ENCODE measurements at regions of chr1 and their contacts with region 1.

Region 1: DNA sequence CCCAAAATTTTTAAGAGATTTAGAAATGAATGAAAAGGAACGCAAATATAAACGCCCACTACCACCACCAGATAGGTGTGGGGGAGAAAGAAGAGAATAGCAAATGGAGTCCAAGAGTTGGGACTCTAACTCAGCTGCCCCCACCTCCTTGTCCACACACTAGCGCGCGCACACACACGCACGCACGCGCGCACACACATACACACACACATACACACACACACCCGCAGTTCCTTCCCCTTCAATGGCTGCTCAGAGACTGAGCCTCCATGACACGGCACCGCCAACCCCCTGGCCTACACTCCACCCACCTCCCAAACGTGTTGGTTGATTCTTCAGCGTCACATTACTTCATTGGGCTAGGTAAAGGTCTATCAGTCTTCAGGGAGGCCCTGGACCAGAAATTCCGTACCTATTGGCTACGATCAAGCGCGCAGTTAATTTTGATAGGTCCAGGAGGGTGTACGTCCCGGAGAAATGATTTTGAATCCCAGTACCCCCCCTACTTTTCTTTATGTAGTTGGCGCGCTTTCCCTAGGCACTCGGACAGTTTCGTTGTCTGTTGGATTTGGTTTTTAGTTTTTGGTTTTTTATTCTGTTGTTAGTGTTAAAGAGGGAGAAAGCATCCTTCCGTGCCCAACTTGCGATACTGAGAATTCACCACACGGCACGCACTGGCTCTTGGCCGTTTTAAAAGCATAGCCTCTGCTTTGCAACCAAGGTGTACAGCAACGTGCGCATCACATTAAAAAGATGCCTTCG is at the start of gene ANP32E:
- DNase-seq: peak; percentile 95
- H3K4me3 Mint-ChIP-seq: no peak within 1 kb of the TSS
- H3K27ac Mint-ChIP-seq: peak within 1 kb of the TSS; percentile 97
- H3K4me1 Mint-ChIP-seq: peaks cover 18% of the 10 kb centered on the region
- H3K27me3 Mint-ChIP-seq: peaks cover 1% of the 10 kb centered on the region
- total RNA-seq, gene ANP32E: 195 and 198 TPM in 2 replicates

Region 2: DNA sequence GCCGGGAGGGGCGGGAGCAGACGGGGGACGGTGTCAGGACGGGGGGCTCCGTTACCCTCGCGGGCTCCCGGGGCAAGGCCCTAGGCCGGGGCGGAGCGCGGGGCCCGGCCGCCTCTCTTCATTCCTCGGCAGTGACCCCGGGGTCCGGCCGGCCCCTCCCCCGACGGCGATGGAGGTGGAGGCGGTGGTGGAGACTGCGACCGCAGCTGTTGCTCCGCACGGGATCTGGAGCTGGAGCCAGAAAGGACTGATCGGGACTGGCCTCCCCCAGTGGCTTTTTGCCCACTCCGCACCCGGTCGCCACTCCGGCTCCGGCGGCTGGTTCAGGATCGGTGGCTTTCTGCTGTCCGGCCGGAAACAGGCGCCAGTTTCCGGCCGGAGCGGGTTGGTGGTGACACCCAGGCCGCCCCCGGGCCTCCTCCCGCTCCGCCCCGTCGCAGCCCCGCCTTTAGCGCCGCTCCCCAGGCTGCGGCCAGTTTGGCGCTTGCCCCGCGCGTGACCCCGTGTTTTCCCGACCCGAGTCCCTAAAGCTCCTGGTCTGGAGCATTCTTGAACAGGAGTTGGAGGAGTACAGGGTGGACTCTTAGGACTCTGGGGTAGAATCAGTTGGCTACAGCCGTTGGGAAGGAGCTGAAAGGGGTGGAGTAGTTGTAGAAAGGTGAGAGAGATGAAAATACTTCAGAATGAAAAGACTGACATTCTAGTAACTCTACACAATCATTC is 225.5 kb before region 1 on chr1 and contains the start of gene OTUD7B:
- intact Hi-C with region 1: loop called (anchors 5 kb)
- DNase-seq: peak; percentile 69
- H3K4me3 Mint-ChIP-seq: peak within 1 kb of the TSS; percentile 97
- H3K27ac Mint-ChIP-seq: peak within 1 kb of the TSS; percentile 97
- H3K4me1 Mint-ChIP-seq: peaks cover 38% of the 10 kb centered on the region
- H3K27me3 Mint-ChIP-seq: no peaks in the 10 kb centered on the region
- total RNA-seq, gene OTUD7B: 26.1 and 28.2 TPM in 2 replicates

Region 3: DNA sequence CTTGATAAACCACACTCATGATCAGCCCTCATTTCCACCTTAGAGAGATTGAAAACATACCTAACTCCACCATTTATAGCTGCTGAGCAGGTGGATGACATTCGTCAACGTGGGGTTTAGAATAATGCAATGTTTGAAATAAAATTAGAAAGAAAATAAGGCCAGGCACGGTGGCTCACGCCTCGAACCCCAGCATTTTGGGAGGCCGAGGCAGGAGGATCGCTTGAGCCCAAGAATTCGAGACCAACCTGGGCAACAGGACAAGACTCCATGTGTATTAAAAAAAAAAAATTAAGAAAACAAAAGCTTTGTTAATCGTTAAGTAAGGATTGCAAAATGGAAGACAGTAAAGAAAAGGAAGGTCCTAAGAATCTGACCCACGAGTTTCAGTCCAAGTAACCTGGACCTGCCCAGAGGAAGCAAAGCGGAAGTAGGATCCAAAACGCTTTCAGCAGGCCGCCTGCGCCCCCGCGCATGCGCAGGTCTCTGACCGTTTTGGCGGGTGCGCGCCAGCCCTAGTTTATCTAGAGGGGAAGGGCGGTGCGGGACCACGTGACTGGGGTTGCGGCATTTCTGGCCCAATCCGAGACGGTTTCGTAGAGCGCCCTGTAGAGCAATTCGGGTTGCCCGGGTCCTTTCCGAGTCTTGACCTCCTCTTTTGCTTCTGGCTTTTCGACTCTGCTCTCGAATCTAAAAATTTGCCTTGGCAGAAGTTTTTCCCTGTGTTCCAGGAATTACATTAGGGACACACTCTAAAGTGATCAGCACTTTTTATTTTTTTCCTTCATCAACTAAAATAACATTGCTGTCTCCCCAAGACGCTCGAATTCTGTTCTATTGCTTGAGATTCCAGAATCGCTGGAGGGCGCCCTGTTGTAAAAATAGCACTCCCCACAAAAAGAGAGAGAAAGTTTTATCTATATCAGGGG is 22.6 kb before region 1 on chr1:
- intact Hi-C with region 1: loop called (anchors 1 kb)
- DNase-seq: peak; percentile 90
- H3K4me3 Mint-ChIP-seq: peak overlapping the region; percentile 87
- H3K27ac Mint-ChIP-seq: peak overlapping the region; percentile 97
- H3K4me1 Mint-ChIP-seq: peaks cover 17% of the 10 kb centered on the region
- H3K27me3 Mint-ChIP-seq: no peaks in the 10 kb centered on the region

Region 4: GRCh38 chr1:150281837-150282653 is 46.0 kb after region 1 on chr1 and contains the start of gene CIART:
- intact Hi-C with region 1: loop called (anchors 5 kb)
- DNase-seq: peak; percentile 72
- H3K4me3 Mint-ChIP-seq: peak within 1 kb of the TSS; percentile 90
- H3K27ac Mint-ChIP-seq: peak within 1 kb of the TSS; percentile 86
- H3K4me1 Mint-ChIP-seq: peaks cover 24% of the 10 kb centered on the region
- H3K27me3 Mint-ChIP-seq: peaks cover 17% of the 10 kb centered on the region
- total RNA-seq, gene CIART: 4.2 TPM in 2 replicates

Region 5: GRCh38 chr1:150363426-150364230 is 127.6 kb after region 1 on chr1 and contains the start of gene RPRD2:
- intact Hi-C with region 1: loop called (anchors 5 kb)
- DNase-seq: peak; percentile 99
- H3K4me3 Mint-ChIP-seq: peak within 1 kb of the TSS; percentile 93
- H3K27ac Mint-ChIP-seq: peak within 1 kb of the TSS; percentile 99
- H3K4me1 Mint-ChIP-seq: peaks cover 23% of the 10 kb centered on the region
- H3K27me3 Mint-ChIP-seq: no peaks in the 10 kb centered on the region
- total RNA-seq, gene RPRD2: 21.9 and 22.8 TPM in 2 replicates

Region 6: DNA sequence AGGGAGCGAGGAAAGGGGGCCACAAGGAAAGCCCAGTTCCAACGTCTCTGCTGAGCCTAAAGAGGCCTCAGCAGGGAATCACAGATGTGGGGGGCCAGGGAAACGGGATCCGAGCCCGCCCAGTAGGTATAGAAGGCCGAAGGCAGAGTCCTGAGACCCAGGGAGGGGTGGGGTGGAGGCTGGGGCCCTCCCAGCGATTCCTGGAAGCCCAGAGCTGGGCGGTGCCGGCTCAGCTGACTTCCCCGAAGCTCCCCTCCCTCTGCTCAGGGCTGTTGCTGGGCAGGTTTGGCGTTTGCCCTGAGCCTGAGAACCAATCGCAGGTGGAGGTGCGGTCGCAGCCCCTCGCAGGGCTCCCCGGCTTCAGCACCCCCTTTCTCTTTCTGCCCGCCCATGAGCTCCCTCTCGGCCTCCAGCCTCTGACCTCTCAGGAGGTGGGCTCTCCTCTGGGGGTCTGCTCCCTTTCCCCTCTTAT is 326.0 kb after region 1 on chr1:
- intact Hi-C with region 1: no loop called
- DNase-seq: peak; percentile 86
- H3K4me3 Mint-ChIP-seq: peak overlapping the region; percentile 97
- H3K27ac Mint-ChIP-seq: peak overlapping the region; percentile 100
- H3K4me1 Mint-ChIP-seq: peaks cover 44% of the 10 kb centered on the region
- H3K27me3 Mint-ChIP-seq: no peaks in the 10 kb centered on the region

Measured in activated T-helper 2 cell treated with anti-CD3 and anti-CD28 coated beads, Interferon-gamma antibody, Interleukin-2, Interleukin-4, amounts not matched to agents 10 μg/mL and 5 μg/mL and 100 μg/mL, durations not matched to agents 14 hours and 24 hours and 36 hours (primary cell).